Astrocyte of the cerebellum (primary cell): ENCODE measurements at regions of chr20 and their contacts with region 1.

Region 1: DNA sequence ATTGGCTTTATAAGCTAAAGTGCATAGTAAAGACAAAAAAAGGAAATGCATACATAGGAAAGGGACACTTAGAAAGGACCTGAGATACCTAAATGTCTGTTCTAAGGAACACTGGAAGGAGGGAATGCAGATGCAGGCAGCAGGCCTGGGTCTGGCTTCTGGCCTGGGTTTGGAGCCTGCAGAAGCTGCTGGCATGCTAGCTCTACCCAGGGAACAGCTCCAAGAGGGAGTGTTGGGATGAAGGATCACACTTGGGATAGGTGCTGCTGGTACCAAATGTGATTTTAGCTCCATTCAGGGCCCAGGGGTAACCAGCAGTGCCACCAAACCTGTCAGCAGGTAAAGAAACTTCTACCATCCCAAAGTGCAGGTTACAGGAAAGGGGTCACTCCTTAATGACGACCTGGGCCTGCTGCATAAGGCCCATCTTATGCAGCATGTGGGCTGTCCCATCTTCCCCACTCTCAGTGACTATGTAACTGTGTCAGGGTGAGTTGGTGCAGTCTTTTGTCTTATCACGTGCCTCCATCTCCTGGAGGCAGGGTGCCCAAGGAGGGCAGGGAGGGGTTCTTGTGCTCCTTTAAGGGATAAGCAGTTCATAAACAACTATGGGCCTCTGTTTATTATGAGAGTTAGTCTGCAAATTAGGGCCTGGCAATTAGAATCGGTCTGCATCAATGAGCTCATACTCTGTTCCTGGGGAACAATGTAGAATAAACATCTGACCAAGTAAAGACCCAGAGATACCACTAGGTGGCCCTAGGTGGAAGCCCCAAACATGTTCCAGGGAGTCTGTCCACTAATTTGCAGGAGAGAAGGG is 26.9 kb downstream of the DDX27 start:
- DNase-seq: peak; percentile 35
- H3K4me3 ChIP-seq: no peak overlapping the region
- CTCF ChIP-seq: peak; percentile 82

Region 2: DNA sequence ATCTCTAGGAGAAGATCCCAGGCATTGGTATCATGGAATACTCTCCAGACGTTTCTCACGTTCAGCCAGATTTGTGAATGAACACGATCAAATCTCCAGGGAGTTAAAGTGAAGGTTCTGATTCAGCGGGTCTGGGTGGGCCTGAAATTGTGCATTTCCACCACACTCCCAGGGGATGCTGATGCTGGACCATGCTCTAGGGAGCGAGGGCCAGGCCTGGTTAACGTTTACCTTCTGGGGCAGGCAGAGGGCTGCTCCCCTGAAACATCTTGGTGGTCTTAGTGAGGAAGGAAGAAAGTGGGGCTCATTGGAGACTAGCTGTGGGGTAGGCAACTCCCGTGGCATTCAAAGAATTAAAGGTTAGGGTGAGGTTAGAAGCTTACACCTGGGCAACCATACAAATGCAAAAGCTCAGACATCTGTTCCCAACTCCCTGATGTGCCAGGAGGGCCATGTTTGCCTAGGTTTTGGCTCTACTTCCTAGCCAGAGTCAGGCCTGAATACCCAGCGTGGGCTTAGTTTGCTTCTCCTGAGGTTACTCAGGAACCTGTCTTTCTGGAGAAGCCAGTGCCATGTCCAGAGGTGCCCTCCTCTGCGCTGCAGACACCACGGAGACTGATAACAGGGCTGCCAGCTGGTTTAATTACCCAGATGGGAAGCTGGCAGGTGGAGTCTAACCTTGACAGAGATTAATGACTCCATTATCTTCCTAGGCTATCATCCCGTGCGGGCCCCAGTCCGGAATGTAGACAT is 60.6 kb after region 1 on chr20:
- in situ Hi-C with region 1: loop called (anchors 5 kb)
- DNase-seq: no peak
- H3K4me3 ChIP-seq: no peak overlapping the region
- CTCF ChIP-seq: no peak